A673 (cell line): ENCODE measurements at regions of chr2 and their contacts with region 1.

Region 1: GRCh38 chr2:177263451-177264208 is 897 bp downstream of the NFE2L2 start:
- DNase-seq: peak; percentile 98
- H3K4me3 ChIP-seq: peak overlapping the region; percentile 94
- H3K27ac ChIP-seq: peak overlapping the region; percentile 99
- H3K4me1 ChIP-seq: peaks cover 30% of the 10 kb centered on the region
- H3K27me3 ChIP-seq: no peaks in the 10 kb centered on the region
- CTCF ChIP-seq: peak; percentile 89

Region 2: GRCh38 chr2:177164584-177165052 is 99.0 kb before region 1 on chr2:
- CTCF ChIA-PET with region 1: interaction called, 9 read pairs
- POLR2A ChIA-PET with region 1: interaction called, 3 read pairs
- intact Hi-C with region 1: loop called (anchors 10 kb)
- DNase-seq: peak; percentile 89
- H3K4me3 ChIP-seq: peak overlapping the region; percentile 28
- H3K27ac ChIP-seq: peak overlapping the region; percentile 66
- H3K4me1 ChIP-seq: peaks cover 48% of the 10 kb centered on the region
- H3K27me3 ChIP-seq: no peaks in the 10 kb centered on the region
- CTCF ChIP-seq: peak; percentile 100

Region 3: GRCh38 chr2:177212106-177212890 is 51.3 kb before region 1 on chr2 and contains the start of gene HNRNPA3:
- CTCF ChIA-PET with region 1: no interaction called
- POLR2A ChIA-PET with region 1: interaction called, 3 read pairs
- intact Hi-C with region 1: loop called (anchors 2 kb)
- DNase-seq: peak; percentile 99
- H3K4me3 ChIP-seq: peak within 1 kb of the TSS; percentile 69
- H3K27ac ChIP-seq: peak within 1 kb of the TSS; percentile 99
- H3K4me1 ChIP-seq: peaks cover 21% of the 10 kb centered on the region
- H3K27me3 ChIP-seq: no peaks in the 10 kb centered on the region
- CTCF ChIP-seq: 0 out of 2 replicates have a peak, but pooled peaks have one; percentile 28
- total RNA-seq, gene HNRNPA3: 454 and 462 TPM in 2 replicates

Region 4: DNA sequence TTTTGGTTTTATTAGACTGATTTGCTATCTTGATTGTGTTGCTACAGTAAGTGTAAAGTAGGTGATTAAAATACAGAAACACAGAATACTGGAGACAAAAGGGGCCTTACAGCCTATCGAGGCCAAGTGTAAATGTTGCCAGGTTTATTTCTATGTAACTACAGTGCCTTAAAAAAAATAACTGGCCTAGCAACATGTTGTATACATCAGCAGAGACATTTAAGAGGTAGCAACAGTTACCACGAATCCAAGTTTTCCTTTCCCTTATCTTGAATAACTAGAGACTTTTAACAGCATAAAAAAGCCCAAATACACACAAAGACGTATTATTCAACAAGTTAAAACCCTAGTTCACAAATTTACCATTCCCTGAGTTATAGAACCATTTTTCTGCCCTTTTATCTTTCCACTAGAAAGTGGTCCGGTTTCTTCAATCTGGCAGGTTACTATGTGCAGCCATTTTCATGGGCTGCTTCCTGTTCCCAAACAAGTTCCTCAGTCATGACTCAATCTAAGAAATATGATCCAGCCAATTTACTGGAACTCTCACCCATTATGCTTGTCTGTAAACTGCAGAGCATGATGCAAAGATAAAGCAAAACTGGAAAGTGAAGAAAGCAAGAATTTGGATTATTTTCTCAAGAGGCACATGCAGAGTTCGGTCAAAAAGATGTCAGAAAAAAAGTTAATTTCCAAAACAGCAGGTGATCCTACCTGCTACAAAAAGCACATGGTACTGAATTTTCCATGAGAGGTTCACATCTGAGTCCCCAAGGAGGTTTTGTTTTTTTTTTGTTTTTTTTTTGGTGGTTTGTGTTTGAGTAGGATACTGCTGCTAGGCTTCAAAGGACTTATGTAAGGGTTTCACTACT is 21.3 kb before region 1 on chr2:
- CTCF ChIA-PET with region 1: no interaction called
- POLR2A ChIA-PET with region 1: no interaction called
- intact Hi-C with region 1: loop called (anchors 1 kb)
- DNase-seq: peak; percentile 87
- H3K4me3 ChIP-seq: peak overlapping the region; percentile 25
- H3K27ac ChIP-seq: peak overlapping the region; percentile 93
- H3K4me1 ChIP-seq: peaks cover 72% of the 10 kb centered on the region
- H3K27me3 ChIP-seq: no peaks in the 10 kb centered on the region
- CTCF ChIP-seq: no peak

Region 5: DNA sequence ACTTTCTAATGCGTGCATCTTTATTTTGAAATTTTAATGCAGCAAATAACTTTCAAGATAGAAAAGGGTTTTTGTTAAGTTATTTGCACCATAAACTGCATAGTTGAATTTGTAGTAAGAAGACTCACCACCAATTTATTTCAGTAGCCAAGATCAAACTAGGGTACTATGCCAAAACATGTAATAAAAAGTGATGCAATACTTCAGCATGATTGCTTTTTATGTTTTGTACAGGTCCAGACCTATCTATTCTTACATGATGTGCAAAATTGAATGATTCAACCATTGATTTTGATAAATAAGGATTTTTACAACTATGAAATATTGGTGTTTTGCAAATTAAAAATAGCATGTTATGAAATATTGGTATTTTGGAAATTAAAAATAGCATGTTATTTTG is 155.6 kb after region 1 on chr2:
- CTCF ChIA-PET with region 1: interaction called, 5 read pairs
- POLR2A ChIA-PET with region 1: no interaction called
- intact Hi-C with region 1: loop called (anchors 5 kb)
- DNase-seq: peak; percentile 40
- H3K4me3 ChIP-seq: no peak overlapping the region
- H3K27ac ChIP-seq: peak overlapping the region; percentile 56
- H3K4me1 ChIP-seq: peaks cover 35% of the 10 kb centered on the region
- H3K27me3 ChIP-seq: no peaks in the 10 kb centered on the region
- CTCF ChIP-seq: no peak

Region 6: GRCh38 chr2:177429688-177430325 is 166.2 kb after region 1 on chr2:
- CTCF ChIA-PET with region 1: no interaction called
- POLR2A ChIA-PET with region 1: no interaction called
- intact Hi-C with region 1: no loop called
- DNase-seq: no peak
- H3K4me3 ChIP-seq: no peak overlapping the region
- H3K27ac ChIP-seq: no peak overlapping the region
- H3K4me1 ChIP-seq: no peaks in the 10 kb centered on the region
- H3K27me3 ChIP-seq: no peaks in the 10 kb centered on the region
- CTCF ChIP-seq: no peak

Region 7: DNA sequence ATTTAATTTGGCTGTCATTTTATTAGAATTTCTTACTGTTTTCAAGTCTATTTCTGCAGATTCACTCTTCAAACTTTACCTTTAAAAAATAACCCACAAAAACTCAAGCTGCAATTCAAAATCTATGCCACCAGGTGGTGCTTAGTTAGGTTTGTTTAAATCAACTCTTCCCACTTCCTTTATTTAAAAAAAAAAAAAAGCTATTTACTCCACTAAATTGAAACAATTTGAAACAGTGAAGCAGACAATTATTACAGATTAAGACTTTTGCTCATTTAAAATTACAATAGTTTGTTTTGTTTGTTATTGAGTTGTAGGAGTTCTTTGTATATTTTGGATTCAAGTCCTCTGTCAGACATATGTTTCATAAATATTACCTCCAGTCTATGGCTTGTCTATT is 508.9 kb after region 1 on chr2:
- CTCF ChIA-PET with region 1: no interaction called
- POLR2A ChIA-PET with region 1: interaction called, 16 read pairs
- intact Hi-C with region 1: no loop called
- DNase-seq: peak; percentile 51
- H3K4me3 ChIP-seq: no peak overlapping the region
- H3K27ac ChIP-seq: no peak overlapping the region
- H3K4me1 ChIP-seq: no peaks in the 10 kb centered on the region
- H3K27me3 ChIP-seq: no peaks in the 10 kb centered on the region
- CTCF ChIP-seq: peak; percentile 63